ENCODE measurements at regions of chr19 and their contacts with region 1.

Region 1: DNA sequence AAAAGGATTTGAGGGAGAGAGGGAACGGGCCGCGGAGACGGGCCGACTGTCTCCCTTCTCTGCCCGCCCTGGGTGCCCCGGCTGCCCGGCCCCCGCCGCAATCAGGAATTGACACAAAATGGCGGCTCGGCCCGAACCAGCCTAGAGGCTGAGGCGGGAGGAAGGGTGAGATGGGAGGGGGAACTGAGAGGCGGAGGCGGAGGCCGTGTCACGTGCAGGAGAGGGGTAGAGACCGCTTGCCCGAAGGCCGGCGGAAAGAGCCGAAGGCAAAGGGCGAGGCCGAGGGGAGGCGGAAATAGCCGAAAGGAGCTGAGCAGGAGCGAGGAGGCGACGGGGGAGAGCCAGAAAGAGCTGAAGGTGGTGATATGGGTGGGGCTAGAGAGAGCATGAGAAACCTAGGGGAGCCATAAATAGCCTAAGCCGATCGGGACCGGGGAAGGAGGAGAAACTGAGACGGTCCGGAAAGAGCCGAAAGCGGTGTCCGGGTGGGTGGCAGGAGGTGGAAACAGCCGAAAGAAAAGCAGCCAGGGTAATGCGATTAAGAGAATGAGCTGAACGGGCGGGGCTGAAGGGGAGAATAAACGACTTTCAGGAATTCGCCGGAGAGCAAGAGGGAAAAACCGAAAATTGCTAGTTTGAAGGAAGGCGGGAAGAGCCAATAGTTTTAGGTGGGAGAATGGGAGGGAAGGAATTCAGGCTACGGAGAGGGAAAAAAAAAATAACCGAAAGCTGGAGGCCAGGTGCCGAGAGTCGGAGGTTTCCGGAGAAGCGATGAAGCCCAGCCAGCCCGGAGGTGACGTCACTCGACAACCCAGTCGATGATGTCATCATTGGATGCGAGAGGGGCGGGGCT is at the start of gene ZC3H4:
- H3K4me3 ChIP-seq: peak within 1 kb of the TSS; percentile 76
- H3K27ac ChIP-seq: peak within 1 kb of the TSS; percentile 100
- H3K4me1 ChIP-seq: peaks cover 29% of the 10 kb centered on the region
- CTCF ChIP-seq: no peak

Region 2: DNA sequence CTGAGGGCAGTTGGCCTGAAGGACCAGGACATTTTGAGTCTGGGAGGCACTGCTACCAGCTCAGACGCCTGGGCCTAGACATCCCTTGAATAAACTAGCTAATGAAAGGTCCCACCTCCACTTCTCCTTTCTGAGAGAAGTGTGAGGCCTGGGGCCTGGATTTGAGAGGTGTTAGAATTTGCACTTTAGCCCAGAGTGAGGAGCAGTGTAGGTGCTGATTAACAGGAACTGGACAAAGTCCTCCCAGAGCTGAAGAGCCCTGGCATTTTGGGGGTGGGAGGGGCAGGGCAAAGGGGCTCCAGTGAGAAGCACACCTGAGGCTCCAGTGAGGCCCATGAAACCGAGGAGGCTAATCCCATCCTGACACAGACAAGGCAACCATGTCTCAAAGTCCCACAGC is 309.7 kb before region 1 on chr19:
- CTCF ChIA-PET with region 1: no interaction called
- POLR2A ChIA-PET with region 1: no interaction called
- H3K4me3 ChIP-seq: no peak overlapping the region
- H3K27ac ChIP-seq: no peak overlapping the region
- H3K4me1 ChIP-seq: no peaks in the 10 kb centered on the region
- CTCF ChIP-seq: no peak

Region 3: DNA sequence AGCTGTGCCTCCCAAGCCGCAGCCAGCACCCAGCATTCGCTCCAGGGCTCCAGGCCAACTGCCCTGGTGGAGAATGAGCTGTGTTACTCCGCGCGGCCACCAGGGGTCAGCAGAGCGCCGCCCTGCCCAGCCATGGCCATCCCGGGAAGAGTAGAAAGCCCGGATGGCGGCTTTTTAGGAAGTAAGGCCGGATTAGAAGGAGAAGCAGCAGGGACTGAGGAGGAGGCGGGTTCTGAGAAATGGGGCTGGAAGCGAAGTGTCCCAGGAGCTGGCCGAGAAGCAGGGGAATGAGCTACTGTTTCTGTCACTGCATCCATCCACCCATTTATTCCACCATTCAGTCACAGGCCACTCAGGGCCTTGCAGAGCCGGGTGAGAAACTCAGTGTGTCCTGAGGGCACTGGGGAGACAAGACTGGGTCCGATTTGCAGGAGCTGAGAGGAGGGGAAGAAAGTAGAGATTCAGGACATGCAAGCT is 100.1 kb before region 1 on chr19:
- CTCF ChIA-PET with region 1: interaction called, 10 read pairs
- POLR2A ChIA-PET with region 1: interaction called, 7 read pairs
- H3K4me3 ChIP-seq: no peak overlapping the region
- H3K27ac ChIP-seq: no peak overlapping the region
- H3K4me1 ChIP-seq: no peaks in the 10 kb centered on the region
- CTCF ChIP-seq: peak; percentile 95

Region 4: GRCh38 chr19:47047763-47048405 is 65.3 kb before region 1 on chr19:
- CTCF ChIA-PET with region 1: no interaction called
- POLR2A ChIA-PET with region 1: interaction called, 39 read pairs
- H3K4me3 ChIP-seq: peak overlapping the region; percentile 70
- H3K27ac ChIP-seq: peak overlapping the region; percentile 74
- H3K4me1 ChIP-seq: peaks cover 3% of the 10 kb centered on the region; the same call in 1 of the 2 replicates
- CTCF ChIP-seq: peak; percentile 42; the same call in 1 of the 2 replicates

Region 5: DNA sequence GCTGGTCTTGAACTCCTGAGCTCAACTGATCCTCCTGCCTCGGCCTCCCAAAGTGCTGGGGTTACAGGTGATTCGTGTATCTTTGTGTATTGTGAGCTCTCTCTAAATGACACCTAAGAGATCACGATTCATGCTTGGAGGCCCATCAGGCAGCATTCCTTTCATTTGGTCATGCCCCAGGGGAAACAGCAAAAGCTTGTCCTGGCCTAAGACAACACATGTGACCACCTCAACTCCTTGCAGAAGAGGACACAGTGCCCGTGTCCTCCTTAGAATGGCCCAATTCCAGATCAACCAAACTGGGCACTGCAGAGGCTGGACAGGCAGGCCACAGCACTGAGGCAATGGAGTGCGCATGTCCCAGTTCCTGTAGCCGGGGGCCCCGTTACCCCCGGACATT is 32.1 kb before region 1 on chr19:
- CTCF ChIA-PET with region 1: interaction called, 11 read pairs
- POLR2A ChIA-PET with region 1: interaction called, 36 read pairs
- H3K4me3 ChIP-seq: no peak overlapping the region
- H3K27ac ChIP-seq: peak overlapping the region; percentile 37; the same call in 1 of the 2 replicates
- H3K4me1 ChIP-seq: no peaks in the 10 kb centered on the region
- CTCF ChIP-seq: no peak

Region 6: GRCh38 chr19:47124937-47125668 is 11.9 kb after region 1 on chr19:
- CTCF ChIA-PET with region 1: interaction called, 18 read pairs
- POLR2A ChIA-PET with region 1: interaction called, 25 read pairs
- H3K4me3 ChIP-seq: no peak overlapping the region
- H3K27ac ChIP-seq: no peak overlapping the region
- H3K4me1 ChIP-seq: no peaks in the 10 kb centered on the region
- CTCF ChIP-seq: peak; percentile 44; the same call in 1 of the 2 replicates

Region 7: DNA sequence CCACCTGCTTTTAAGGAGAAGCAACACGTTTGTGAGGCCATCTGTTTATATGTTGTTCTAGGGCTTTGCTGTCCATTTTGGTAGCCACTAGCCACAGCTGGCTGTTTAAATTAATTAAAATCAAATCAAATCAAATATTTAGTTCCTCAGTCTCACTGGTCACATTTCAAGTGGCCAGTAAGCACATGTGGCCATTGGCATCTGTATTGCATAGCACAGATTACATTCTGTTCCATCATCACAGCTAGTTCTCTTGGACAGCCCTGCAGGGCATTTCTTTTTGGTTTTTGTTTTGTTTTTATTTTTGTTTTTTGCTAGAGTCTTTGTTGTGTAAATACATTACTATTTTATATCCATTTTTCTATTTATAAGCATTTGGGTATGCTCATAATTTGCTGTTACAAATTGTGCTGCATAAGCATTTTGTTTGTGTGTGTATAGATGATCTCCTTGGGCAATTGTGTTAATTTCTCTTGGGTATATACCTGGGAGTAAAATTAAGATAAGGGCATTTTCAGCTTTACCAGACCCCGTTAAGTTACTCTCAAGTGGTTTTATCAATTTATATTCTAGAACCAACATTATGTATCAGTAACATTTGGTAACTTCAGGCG is 48.8 kb after region 1 on chr19:
- CTCF ChIA-PET with region 1: no interaction called
- POLR2A ChIA-PET with region 1: no interaction called
- H3K4me3 ChIP-seq: no peak overlapping the region
- H3K27ac ChIP-seq: no peak overlapping the region
- H3K4me1 ChIP-seq: no peaks in the 10 kb centered on the region
- CTCF ChIP-seq: no peak

Region 8: GRCh38 chr19:47225746-47226425 is 112.7 kb after region 1 on chr19:
- CTCF ChIA-PET with region 1: no interaction called
- POLR2A ChIA-PET with region 1: interaction called, 13 read pairs
- H3K4me3 ChIP-seq: peak overlapping the region; percentile 91
- H3K27ac ChIP-seq: peak overlapping the region; percentile 92
- H3K4me1 ChIP-seq: peaks cover 26% of the 10 kb centered on the region
- CTCF ChIP-seq: no peak

Measured in HEK293 (cell line).